Common myeloid progenitor, CD34-positive (primary cell): ENCODE measurements at regions of chr15 and their contacts with region 1.

Region 1: DNA sequence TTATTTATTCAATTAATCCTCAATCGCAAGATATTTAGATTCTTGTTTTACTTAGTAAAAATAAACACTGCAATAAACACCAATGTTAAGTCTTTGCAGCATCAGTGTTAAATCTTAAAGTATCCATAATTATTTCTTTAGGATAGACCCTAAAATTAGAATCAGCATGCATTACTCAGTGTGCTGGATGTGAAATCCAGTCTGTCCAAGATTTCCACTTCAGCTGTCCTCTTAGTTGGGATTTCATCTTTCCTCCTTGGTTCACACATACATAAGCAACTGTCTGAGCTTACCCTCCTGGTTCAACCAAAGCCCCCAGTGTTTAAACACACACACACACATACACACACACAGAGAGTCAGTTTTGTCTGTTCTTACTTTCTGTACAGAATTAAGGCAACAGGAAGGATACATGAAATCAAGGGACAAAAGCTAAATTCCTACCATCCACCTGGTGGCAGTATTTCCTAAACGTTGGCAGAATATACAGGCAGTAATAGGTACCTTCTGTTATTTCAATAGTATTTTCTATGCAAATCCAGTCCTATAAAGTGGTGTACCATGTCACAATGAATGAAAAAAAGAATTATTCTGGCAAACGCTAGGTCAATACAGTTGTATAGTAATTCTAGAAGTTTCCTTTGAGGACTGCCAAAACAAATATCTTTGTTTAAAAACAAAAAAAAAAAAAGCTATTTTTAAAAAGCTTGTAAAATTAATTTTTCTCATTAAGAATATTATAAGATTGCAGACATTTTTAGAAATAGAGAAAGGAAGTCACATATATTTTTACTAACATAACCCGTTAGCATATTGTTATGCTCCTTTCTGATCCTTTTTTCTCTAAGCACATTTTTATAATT is 27.3 kb upstream of the DMXL2 start:
- DNase-seq: peak; percentile 84 to 92 (median 88)
- H3K4me3 ChIP-seq: no peak overlapping the region
- H3K27ac ChIP-seq: no peak overlapping the region
- H3K4me1 ChIP-seq: peaks cover 0 to 17% (median 8%) of the 10 kb centered on the region in 4 experiments
- H3K27me3 ChIP-seq: no peaks in the 10 kb centered on the region

Region 2: DNA sequence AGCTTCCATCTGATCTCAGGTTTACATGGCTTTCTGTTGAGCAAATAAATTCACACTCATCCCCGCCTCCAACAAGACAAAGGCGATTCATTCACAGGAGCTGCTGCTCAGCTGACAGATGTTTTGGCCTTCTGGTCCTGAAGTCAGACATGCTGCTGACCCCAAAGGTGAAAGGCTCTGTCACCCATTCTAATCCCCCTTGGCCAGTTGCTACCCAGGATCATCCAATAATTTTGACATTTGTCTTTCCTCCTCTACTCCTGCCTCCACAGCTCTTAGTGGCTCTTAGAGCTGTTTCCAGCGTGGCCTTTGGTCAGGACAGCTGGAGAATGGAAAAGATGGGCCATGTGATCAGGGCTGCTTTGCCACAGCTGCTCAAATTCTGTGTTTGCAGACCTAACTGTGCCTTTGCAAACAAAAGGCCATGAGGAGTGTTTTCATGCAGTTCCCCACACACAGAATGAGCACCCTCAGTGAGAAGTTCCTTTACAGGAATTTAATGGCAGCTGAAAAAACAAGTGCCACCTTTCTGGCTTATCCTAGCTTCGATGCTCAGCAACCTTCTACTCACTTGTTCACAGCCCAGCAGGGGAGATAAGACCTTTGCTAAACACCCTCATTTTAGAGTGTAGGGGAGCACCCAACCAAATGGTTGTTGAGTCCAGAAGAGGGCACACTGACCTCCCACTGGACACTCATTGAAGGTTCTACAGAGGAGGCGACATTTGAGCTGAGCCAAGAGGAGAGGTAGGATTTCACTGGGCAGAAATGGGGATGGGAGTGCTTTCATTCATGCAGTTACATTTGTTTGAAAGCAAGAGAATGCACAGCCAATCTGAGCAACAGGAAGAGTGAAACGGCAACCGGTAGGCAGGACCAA is 350.5 kb before region 1 on chr15:
- CTCF ChIA-PET with region 1: no interaction called
- POLR2A ChIA-PET with region 1: no interaction called
- DNase-seq: no peak
- H3K4me3 ChIP-seq: no peak overlapping the region
- H3K27ac ChIP-seq: no peak overlapping the region
- H3K4me1 ChIP-seq: no peaks in the 10 kb centered on the region
- H3K27me3 ChIP-seq: peaks cover 0 to 4% (median 0%) of the 10 kb centered on the region in 5 experiments

Region 3: DNA sequence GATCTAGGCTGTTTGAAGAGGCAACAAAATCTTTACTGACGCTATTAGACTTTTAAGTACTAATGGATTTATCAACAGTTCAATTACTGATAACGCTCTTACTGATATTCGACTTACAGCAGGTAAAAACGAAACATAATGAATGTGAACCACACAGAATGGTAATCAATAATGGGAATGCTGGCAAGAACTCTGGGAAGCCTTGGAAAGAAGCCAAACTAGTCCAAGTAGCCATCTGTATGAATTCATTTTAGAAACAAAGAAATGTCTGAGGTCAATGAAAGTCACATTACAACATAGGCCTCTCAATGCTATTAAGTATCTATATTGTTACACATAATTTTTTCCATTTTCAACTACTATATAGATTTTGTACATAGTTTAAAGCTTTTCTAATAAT is 157.4 kb before region 1 on chr15:
- CTCF ChIA-PET with region 1: no interaction called
- POLR2A ChIA-PET with region 1: no interaction called
- DNase-seq: no peak
- H3K4me3 ChIP-seq: no peak overlapping the region
- H3K27ac ChIP-seq: no peak overlapping the region
- H3K4me1 ChIP-seq: peaks cover 0 to 2% (median 0%) of the 10 kb centered on the region in 4 experiments
- H3K27me3 ChIP-seq: no peaks in the 10 kb centered on the region

Region 4: GRCh38 chr15:51731549-51732267 is 81.8 kb after region 1 on chr15:
- CTCF ChIA-PET with region 1: interaction called, 21 read pairs
- POLR2A ChIA-PET with region 1: no interaction called
- DNase-seq: peak; percentile 85 to 95 (median 93)
- H3K4me3 ChIP-seq: peak overlapping the region in 6 of 7 experiments; percentile 61 to 91 (median 72)
- H3K27ac ChIP-seq: peak overlapping the region; percentile 68 to 86
- H3K4me1 ChIP-seq: peaks cover 60 to 97% (median 73%) of the 10 kb centered on the region in 4 experiments
- H3K27me3 ChIP-seq: no peaks in the 10 kb centered on the region

Region 5: GRCh38 chr15:51737280-51738017 is 87.6 kb after region 1 on chr15 and contains the start of gene LYSMD2:
- CTCF ChIA-PET with region 1: interaction called, 21 read pairs
- POLR2A ChIA-PET with region 1: interaction called, 3 read pairs
- DNase-seq: peak; percentile 61 to 85 (median 73)
- H3K4me3 ChIP-seq: peak within 1 kb of the TSS; percentile 69 to 96 (median 90)
- H3K27ac ChIP-seq: peak within 1 kb of the TSS; percentile 64 to 81
- H3K4me1 ChIP-seq: peaks cover 35 to 62% (median 49%) of the 10 kb centered on the region in 4 experiments
- H3K27me3 ChIP-seq: no peaks in the 10 kb centered on the region

Region 6: DNA sequence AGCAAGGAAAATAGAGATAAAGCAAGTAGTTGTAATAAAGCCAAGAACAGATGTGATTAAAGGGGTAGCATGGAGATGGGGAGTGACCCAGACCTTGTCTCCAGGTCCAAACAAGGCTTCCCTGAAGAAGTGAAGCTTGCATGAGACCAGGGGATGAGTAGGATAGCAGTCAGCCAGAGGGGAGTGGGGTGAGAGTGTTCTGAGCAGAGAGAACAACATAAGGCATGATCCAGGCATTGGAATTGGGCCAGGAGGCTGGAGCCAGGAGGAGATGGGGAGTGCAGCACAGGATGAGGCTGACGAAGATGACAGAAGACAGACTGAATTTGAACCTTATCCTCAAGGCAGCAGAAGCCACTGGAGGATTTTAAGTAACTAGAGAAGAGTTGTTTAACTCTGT is 108.8 kb after region 1 on chr15:
- CTCF ChIA-PET with region 1: interaction called, 11 read pairs
- POLR2A ChIA-PET with region 1: no interaction called
- DNase-seq: no peak
- H3K4me3 ChIP-seq: no peak overlapping the region
- H3K27ac ChIP-seq: no peak overlapping the region
- H3K4me1 ChIP-seq: peaks cover 0 to 26% (median 17%) of the 10 kb centered on the region in 4 experiments
- H3K27me3 ChIP-seq: peaks cover 0 to 1% (median 0%) of the 10 kb centered on the region in 5 experiments